ENCODE measurements at regions of chr14 and their contacts with region 1.

Region 1: DNA sequence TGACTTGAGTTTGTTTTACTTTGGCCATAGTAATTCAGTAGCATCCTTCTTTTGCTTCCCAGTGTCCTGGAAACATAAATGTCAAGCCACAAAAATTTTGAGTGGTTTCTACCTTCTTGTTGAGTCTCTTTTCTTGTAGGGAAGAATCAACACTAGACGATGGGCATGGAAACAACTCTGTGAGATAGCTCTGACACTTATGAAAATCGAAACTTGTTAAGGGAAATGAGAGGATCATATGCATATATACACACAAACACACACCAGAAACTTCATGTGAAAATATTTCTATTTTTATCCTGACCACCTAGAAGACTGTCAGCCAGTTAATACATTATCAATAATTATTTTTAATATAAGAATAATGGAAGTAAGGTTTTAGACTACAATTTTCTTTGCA is 1247.3 kb upstream of the FLRT2 start:
- DNase-seq: no peak
- ATAC-seq: no peak
- H3K4me3 ChIP-seq: no peak overlapping the region
- H3K4me3 Mint-ChIP-seq: no peak overlapping the region
- H3K27ac ChIP-seq: no peak overlapping the region
- H3K27ac Mint-ChIP-seq: no peak overlapping the region
- H3K4me1 ChIP-seq: no peaks in the 10 kb centered on the region
- H3K4me1 Mint-ChIP-seq: no peaks in the 10 kb centered on the region
- H3K27me3 ChIP-seq: no peaks in the 10 kb centered on the region
- H3K27me3 Mint-ChIP-seq: no peaks in the 10 kb centered on the region

Region 2: GRCh38 chr14:84228702-84229101 is 53.9 kb before region 1 on chr14:
- CTCF ChIA-PET with region 1: interaction called in 1 of 2 experiments, 10 read pairs
- POLR2A ChIA-PET with region 1: no interaction called
- DNase-seq: no peak
- ATAC-seq: no peak
- H3K4me3 ChIP-seq: no peak overlapping the region
- H3K4me3 Mint-ChIP-seq: no peak overlapping the region
- H3K27ac ChIP-seq: no peak overlapping the region
- H3K27ac Mint-ChIP-seq: no peak overlapping the region
- H3K4me1 ChIP-seq: no peaks in the 10 kb centered on the region
- H3K4me1 Mint-ChIP-seq: no peaks in the 10 kb centered on the region
- H3K27me3 ChIP-seq: no peaks in the 10 kb centered on the region
- H3K27me3 Mint-ChIP-seq: no peaks in the 10 kb centered on the region